ENCODE measurements at regions of chr6 and their contacts with region 1.

Region 1: DNA sequence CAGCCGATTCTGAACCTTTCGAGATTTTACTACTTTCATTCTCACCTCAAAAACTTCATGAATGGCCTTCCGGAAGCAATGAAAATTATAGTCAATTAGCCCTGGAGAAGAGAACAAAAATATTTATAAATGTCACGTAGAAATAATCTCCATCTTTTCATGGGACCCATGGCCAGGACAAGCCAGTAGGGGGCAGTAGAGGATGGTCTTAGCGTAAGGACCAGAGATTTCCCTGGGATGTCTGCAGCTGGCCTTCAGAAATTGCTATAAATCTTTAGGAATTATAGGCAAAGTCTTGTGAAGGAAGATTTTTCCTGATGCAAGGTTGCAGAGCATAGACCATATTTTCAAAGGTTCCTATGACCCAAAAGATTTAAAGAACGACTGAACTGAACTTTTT is 15.6 kb upstream of the UBE2J1 start:
- DNase-seq: no peak
- ATAC-seq: peak; percentile 67; the same call in 1 of the 2 replicates
- H3K4me3 ChIP-seq: no peak overlapping the region
- H3K27ac ChIP-seq: no peak overlapping the region
- H3K4me1 ChIP-seq: no peaks in the 10 kb centered on the region
- H3K27me3 ChIP-seq: no peaks in the 10 kb centered on the region
- CTCF ChIP-seq: peak; percentile 91

Region 2: GRCh38 chr6:89110284-89110683 is 257.8 kb before region 1 on chr6:
- CTCF ChIA-PET with region 1: no interaction called
- POLR2A ChIA-PET with region 1: no interaction called
- in situ Hi-C with region 1: no loop called
- intact Hi-C with region 1: no loop called
- DNase-seq: no peak
- ATAC-seq: no peak
- H3K4me3 ChIP-seq: no peak overlapping the region
- H3K27ac ChIP-seq: no peak overlapping the region
- H3K4me1 ChIP-seq: no peaks in the 10 kb centered on the region
- H3K27me3 ChIP-seq: no peaks in the 10 kb centered on the region; the same call in 1 of the 2 replicates
- CTCF ChIP-seq: no peak

Region 3: DNA sequence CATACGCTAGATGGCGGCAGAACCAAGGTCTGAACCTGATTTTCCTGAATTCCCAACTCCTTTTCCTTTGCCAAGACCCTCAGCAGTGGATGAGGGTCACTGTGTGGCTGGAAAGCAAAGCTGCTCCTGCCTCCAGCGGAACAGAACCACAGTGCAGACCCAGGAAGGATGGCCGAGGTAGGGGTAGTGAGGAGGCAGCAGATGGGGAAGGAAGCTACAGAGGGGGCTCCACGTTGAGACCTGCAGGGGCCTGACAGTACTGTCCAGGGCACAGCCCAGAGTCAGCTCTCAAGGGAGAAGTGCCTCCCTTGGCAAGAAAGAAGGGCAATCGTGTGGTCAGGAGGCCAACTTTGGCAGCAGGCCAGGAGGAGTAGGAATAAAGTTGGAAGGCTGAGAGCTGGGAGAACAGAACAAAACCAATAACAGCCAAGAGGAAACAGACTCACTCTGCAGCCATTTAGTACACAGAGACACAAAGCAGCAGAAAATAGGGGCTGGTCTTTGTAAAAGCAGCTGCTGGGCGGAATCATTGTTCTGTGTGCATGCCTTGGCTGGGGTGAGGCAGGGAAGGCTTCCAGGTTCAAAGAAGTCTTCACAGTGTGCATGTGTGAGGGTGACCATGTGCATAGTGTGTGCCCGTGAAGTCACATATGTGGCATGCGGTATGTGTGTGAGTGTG is 56.1 kb before region 1 on chr6:
- CTCF ChIA-PET with region 1: no interaction called
- POLR2A ChIA-PET with region 1: no interaction called
- in situ Hi-C with region 1: no loop called
- intact Hi-C with region 1: loop called (anchors 5 kb)
- DNase-seq: no peak
- ATAC-seq: peak; percentile 37
- H3K4me3 ChIP-seq: no peak overlapping the region
- H3K27ac ChIP-seq: no peak overlapping the region
- H3K4me1 ChIP-seq: no peaks in the 10 kb centered on the region; the same call in none of the 2 replicates
- H3K27me3 ChIP-seq: no peaks in the 10 kb centered on the region
- CTCF ChIP-seq: peak; percentile 80

Region 4: GRCh38 chr6:89610149-89610642 is 242.1 kb after region 1 on chr6:
- CTCF ChIA-PET with region 1: no interaction called
- POLR2A ChIA-PET with region 1: no interaction called
- in situ Hi-C with region 1: no loop called
- intact Hi-C with region 1: loop called (anchors 5 kb)
- DNase-seq: peak; percentile 17
- ATAC-seq: peak; percentile 86
- H3K4me3 ChIP-seq: no peak overlapping the region
- H3K27ac ChIP-seq: no peak overlapping the region
- H3K4me1 ChIP-seq: no peaks in the 10 kb centered on the region
- H3K27me3 ChIP-seq: no peaks in the 10 kb centered on the region
- CTCF ChIP-seq: peak; percentile 93

Region 5: DNA sequence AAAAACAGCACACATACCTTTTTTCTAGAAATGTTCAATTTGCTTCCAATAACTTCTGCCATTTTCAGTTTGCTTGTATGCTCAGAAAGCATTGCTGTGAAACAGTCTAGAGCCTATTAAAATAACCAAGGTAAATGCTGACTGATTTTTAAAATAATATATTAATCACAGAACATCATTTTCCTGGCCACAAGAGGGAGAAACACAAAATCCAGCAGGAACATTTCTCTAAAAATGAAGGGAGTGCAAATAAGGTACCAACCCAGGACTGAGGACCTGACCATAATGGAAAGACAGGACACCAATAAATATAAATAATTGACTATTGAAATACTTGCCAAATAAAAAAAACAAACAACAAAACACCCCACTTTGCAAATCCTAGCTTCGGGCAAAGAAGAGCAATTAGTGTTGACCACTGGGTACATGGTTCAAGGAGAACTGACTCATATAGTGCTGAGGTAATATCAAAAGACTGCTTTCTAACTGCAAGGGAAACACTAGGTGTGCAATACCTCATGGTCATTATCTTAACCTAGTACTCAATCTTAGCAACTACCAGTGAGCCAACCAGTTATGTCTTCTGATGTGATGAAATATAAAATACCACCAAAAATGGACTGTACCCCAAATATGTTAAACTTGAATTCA is 408.6 kb after region 1 on chr6:
- CTCF ChIA-PET with region 1: no interaction called
- POLR2A ChIA-PET with region 1: no interaction called
- in situ Hi-C with region 1: no loop called
- intact Hi-C with region 1: no loop called
- DNase-seq: no peak
- ATAC-seq: no peak
- H3K4me3 ChIP-seq: no peak overlapping the region
- H3K27ac ChIP-seq: no peak overlapping the region
- H3K4me1 ChIP-seq: no peaks in the 10 kb centered on the region
- H3K27me3 ChIP-seq: no peaks in the 10 kb centered on the region
- CTCF ChIP-seq: no peak; the same call in 1 of the 2 replicates